ENCODE measurements at regions of chr11 and their contacts with region 1.

Region 1: GRCh38 chr11:108703916-108704315 is 39.0 kb downstream of the DDX10 start:
- DNase-seq: no peak
- ATAC-seq: no peak
- H3K4me3 ChIP-seq: no peak overlapping the region
- H3K27ac ChIP-seq: no peak overlapping the region
- H3K4me1 ChIP-seq: no peaks in the 10 kb centered on the region
- H3K27me3 ChIP-seq: no peaks in the 10 kb centered on the region
- CTCF ChIP-seq: no peak
- POLR2A ChIP-seq: no peak

Region 2: DNA sequence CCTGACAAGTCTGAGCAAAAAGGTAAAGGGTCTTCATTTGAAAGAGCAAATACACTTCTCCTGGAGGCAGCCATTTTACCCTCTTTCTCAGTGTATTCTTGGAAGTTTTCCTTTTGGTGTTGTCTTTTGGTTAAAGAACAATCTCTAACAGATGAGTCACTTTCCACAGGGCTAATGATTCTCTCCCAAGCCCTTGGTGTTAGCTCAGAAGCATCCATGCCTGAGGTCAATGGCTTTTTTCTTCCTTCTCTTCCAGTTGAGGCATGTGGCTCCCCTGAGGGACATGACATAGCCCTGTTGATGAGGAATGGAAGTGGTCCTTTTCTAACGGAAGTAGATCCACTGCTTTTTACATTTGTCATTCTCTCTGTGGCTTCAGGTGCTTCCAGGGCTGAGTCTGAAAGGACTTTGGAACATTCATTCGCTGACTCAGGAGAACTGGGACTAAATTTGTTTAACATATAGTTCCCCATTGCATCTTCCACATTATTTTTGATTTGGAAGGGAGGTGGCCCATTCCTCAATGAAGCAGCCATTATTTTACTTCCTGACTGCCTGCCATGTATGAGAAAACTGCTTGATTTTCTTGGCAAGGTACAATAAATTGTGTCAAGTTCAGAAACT is 192.0 kb before region 1 on chr11:
- intact Hi-C with region 1: no loop called
- DNase-seq: no peak
- ATAC-seq: no peak
- H3K4me3 ChIP-seq: no peak overlapping the region
- H3K27ac ChIP-seq: no peak overlapping the region
- H3K4me1 ChIP-seq: no peaks in the 10 kb centered on the region
- H3K27me3 ChIP-seq: no peaks in the 10 kb centered on the region
- CTCF ChIP-seq: no peak
- POLR2A ChIP-seq: no peak

Region 3: GRCh38 chr11:108863528-108863927 is 159.6 kb after region 1 on chr11:
- intact Hi-C with region 1: loop called in 2 of 10 experiments (anchors 5 to 10 kb)
- DNase-seq: no peak
- ATAC-seq: no peak
- H3K4me3 ChIP-seq: no peak overlapping the region
- H3K27ac ChIP-seq: no peak overlapping the region
- H3K4me1 ChIP-seq: no peaks in the 10 kb centered on the region
- H3K27me3 ChIP-seq: no peaks in the 10 kb centered on the region
- CTCF ChIP-seq: no peak
- POLR2A ChIP-seq: no peak

Region 4: GRCh38 chr11:109697140-109697843 is 993.4 kb after region 1 on chr11:
- intact Hi-C with region 1: loop called in 6 of 10 experiments (anchors 2 to 10 kb)
- DNase-seq: no peak
- ATAC-seq: peak; percentile 64 to 74 (median 71)
- H3K4me3 ChIP-seq: no peak overlapping the region
- H3K27ac ChIP-seq: no peak overlapping the region
- H3K4me1 ChIP-seq: no peaks in the 10 kb centered on the region
- H3K27me3 ChIP-seq: no peaks in the 10 kb centered on the region
- CTCF ChIP-seq: peak; percentile 27 to 64 (median 53)
- POLR2A ChIP-seq: no peak

Region 5: GRCh38 chr11:109864834-109865547 is 1161.1 kb after region 1 on chr11:
- intact Hi-C with region 1: loop called in 6 of 10 experiments (anchors 2 to 10 kb)
- DNase-seq: no peak
- ATAC-seq: peak in 1 of 4 donors; percentile 46
- H3K4me3 ChIP-seq: no peak overlapping the region
- H3K27ac ChIP-seq: no peak overlapping the region
- H3K4me1 ChIP-seq: peaks cover 0 to 6% (median 0%) of the 10 kb centered on the region in 12 donors
- H3K27me3 ChIP-seq: no peaks in the 10 kb centered on the region
- CTCF ChIP-seq: no peak
- POLR2A ChIP-seq: no peak

Region 6: GRCh38 chr11:109939166-109939810 is 1235.4 kb after region 1 on chr11:
- intact Hi-C with region 1: loop called in 9 of 10 experiments (anchors 5 to 10 kb)
- DNase-seq: peak in 2 of 5 donors; percentile 19 to 22
- ATAC-seq: peak in 3 of 4 donors; percentile 69 to 78 (median 74)
- H3K4me3 ChIP-seq: no peak overlapping the region
- H3K27ac ChIP-seq: no peak overlapping the region
- H3K4me1 ChIP-seq: peaks cover 0 to 6% (median 0%) of the 10 kb centered on the region in 12 donors
- H3K27me3 ChIP-seq: no peaks in the 10 kb centered on the region
- CTCF ChIP-seq: peak; percentile 18 to 63 (median 50)
- POLR2A ChIP-seq: no peak

Measured in heart left ventricle (tissue), 16 donors.